ENCODE measurements at regions of chr11 and their contacts with region 1.

Region 1: GRCh38 chr11:20127671-20128527 is 32.4 kb downstream of the DBX1 start:
- DNase-seq: peak; percentile 44
- ATAC-seq: peak; percentile 92
- H3K4me3 ChIP-seq: no peak overlapping the region
- H3K27ac ChIP-seq: no peak overlapping the region
- H3K4me1 ChIP-seq: peaks cover 0 to 9% of the 10 kb centered on the region in 2 experiments; a peak in 1 of 4 replicates
- H3K27me3 ChIP-seq: no peaks in the 10 kb centered on the region
- CTCF ChIP-seq: peak; percentile 71 to 88 (median 83)
- POLR2A ChIP-seq: no peak
- RAD21 ChIP-seq: peak; percentile 88

Region 2: GRCh38 chr11:19519912-19520641 is 607.8 kb before region 1 on chr11:
- CTCF ChIA-PET with region 1: no interaction called
- POLR2A ChIA-PET with region 1: no interaction called
- RAD21 ChIA-PET with region 1: no interaction called
- intact Hi-C with region 1: no loop called
- DNase-seq: no peak
- ATAC-seq: no peak
- H3K4me3 ChIP-seq: no peak overlapping the region
- H3K27ac ChIP-seq: no peak overlapping the region
- H3K4me1 ChIP-seq: no peaks in the 10 kb centered on the region
- H3K27me3 ChIP-seq: peaks cover 43% of the 10 kb centered on the region
- CTCF ChIP-seq: no peak
- POLR2A ChIP-seq: no peak
- RAD21 ChIP-seq: no peak

Region 3: DNA sequence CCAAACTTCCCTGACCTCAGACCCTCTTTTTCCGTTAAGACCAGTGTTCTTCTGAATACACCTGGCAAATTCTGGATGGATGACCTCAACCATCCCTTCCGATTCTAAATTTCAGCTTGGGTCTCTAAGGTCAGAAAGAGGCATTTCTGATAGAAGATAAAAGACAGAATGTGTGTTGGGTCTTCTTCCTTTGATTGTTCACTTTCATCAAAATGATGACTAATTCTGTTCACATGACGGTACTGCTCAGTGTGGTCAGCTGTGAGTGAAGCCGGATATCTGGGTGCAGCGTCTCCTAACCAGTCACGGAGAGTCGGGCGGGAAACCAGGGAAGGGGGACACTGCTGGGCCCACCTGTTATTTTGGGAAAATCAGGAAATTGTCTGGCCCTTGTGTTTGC is 566.9 kb before region 1 on chr11:
- CTCF ChIA-PET with region 1: interaction called, 3 read pairs
- POLR2A ChIA-PET with region 1: no interaction called
- RAD21 ChIA-PET with region 1: no interaction called
- intact Hi-C with region 1: loop called (anchors 5 kb)
- DNase-seq: no peak
- ATAC-seq: no peak
- H3K4me3 ChIP-seq: no peak overlapping the region
- H3K27ac ChIP-seq: no peak overlapping the region
- H3K4me1 ChIP-seq: peaks cover 0 to 6% of the 10 kb centered on the region in 2 experiments; a peak in 1 of 4 replicates
- H3K27me3 ChIP-seq: peaks cover 13% of the 10 kb centered on the region; the same call in 1 of the 2 replicates
- CTCF ChIP-seq: no peak
- POLR2A ChIP-seq: no peak
- RAD21 ChIP-seq: no peak

Region 4: DNA sequence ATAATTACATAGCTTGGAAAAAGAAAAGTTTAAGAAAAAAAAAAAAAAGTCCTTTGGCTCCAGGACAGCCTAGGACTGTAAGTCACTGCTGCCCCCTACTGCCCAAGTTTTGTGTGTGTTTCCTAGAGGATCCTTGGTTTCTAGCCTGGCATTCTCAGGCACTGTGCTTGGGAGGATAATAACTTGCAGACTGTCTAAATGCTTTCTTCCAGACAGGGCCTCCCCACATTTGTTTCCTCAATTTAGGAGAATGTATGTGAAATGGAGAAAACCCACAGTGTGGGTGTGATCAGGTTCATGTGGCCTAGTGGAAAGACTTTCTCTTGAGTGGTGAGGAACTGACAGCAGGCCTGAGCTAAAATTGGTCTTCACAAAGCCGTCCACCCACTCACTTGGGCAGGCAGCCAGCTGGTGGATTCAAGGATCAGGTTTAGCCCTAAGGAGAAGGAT is 224.3 kb before region 1 on chr11:
- CTCF ChIA-PET with region 1: interaction called, 13 read pairs
- POLR2A ChIA-PET with region 1: no interaction called
- RAD21 ChIA-PET with region 1: no interaction called
- intact Hi-C with region 1: loop called (anchors 1 kb)
- DNase-seq: peak; percentile 62
- ATAC-seq: peak; percentile 90
- H3K4me3 ChIP-seq: no peak overlapping the region
- H3K27ac ChIP-seq: no peak overlapping the region
- H3K4me1 ChIP-seq: peaks cover 3 to 4% of the 10 kb centered on the region in 2 experiments; a peak in 3 of 4 replicates
- H3K27me3 ChIP-seq: no peaks in the 10 kb centered on the region
- CTCF ChIP-seq: peak; percentile 73 to 85 (median 76); a peak in 5 of 6 replicates
- POLR2A ChIP-seq: no peak
- RAD21 ChIP-seq: peak; percentile 85

Region 5: GRCh38 chr11:19951558-19952115 is 176.3 kb before region 1 on chr11:
- CTCF ChIA-PET with region 1: interaction called, 16 read pairs
- POLR2A ChIA-PET with region 1: no interaction called
- RAD21 ChIA-PET with region 1: interaction called in 1 of 2 experiments, 3 read pairs
- intact Hi-C with region 1: loop called (anchors 1 kb)
- DNase-seq: peak; percentile 32
- ATAC-seq: peak; percentile 78
- H3K4me3 ChIP-seq: no peak overlapping the region
- H3K27ac ChIP-seq: no peak overlapping the region
- H3K4me1 ChIP-seq: peaks cover 0 to 2% of the 10 kb centered on the region in 2 experiments; a peak in 1 of 4 replicates
- H3K27me3 ChIP-seq: peaks cover 4% of the 10 kb centered on the region
- CTCF ChIP-seq: peak; percentile 47 to 69 (median 60); a peak in 4 of 6 replicates
- POLR2A ChIP-seq: no peak
- RAD21 ChIP-seq: peak; percentile 75

Region 6: GRCh38 chr11:20337526-20338154 is 209.7 kb after region 1 on chr11:
- CTCF ChIA-PET with region 1: interaction called, 7 read pairs
- POLR2A ChIA-PET with region 1: no interaction called
- RAD21 ChIA-PET with region 1: no interaction called
- intact Hi-C with region 1: loop called (anchors 1 kb)
- DNase-seq: peak; percentile 27
- ATAC-seq: peak; percentile 90
- H3K4me3 ChIP-seq: no peak overlapping the region
- H3K27ac ChIP-seq: no peak overlapping the region
- H3K4me1 ChIP-seq: no peaks in the 10 kb centered on the region
- H3K27me3 ChIP-seq: peaks cover 85% of the 10 kb centered on the region
- CTCF ChIP-seq: peak; percentile 47 to 63 (median 51); a peak in 5 of 6 replicates
- POLR2A ChIP-seq: no peak
- RAD21 ChIP-seq: peak; percentile 56

Region 7: GRCh38 chr11:20609727-20610707 is 482.1 kb after region 1 on chr11:
- CTCF ChIA-PET with region 1: interaction called, 23 read pairs
- POLR2A ChIA-PET with region 1: no interaction called
- RAD21 ChIA-PET with region 1: interaction called in 1 of 2 experiments, 3 read pairs
- intact Hi-C with region 1: loop called (anchors 1 kb)
- DNase-seq: peak; percentile 41
- ATAC-seq: peak; percentile 97
- H3K4me3 ChIP-seq: peak overlapping the region in 1 of 2 experiments; percentile 11; a peak in 1 of 4 replicates
- H3K27ac ChIP-seq: no peak overlapping the region
- H3K4me1 ChIP-seq: peaks cover 0 to 9% of the 10 kb centered on the region in 2 experiments; a peak in 1 of 4 replicates
- H3K27me3 ChIP-seq: peaks cover 21% of the 10 kb centered on the region; the same call in 1 of the 2 replicates
- CTCF ChIP-seq: peak; percentile 71 to 90 (median 90); a peak in 5 of 6 replicates
- POLR2A ChIP-seq: no peak
- RAD21 ChIP-seq: peak; percentile 88

Region 8: DNA sequence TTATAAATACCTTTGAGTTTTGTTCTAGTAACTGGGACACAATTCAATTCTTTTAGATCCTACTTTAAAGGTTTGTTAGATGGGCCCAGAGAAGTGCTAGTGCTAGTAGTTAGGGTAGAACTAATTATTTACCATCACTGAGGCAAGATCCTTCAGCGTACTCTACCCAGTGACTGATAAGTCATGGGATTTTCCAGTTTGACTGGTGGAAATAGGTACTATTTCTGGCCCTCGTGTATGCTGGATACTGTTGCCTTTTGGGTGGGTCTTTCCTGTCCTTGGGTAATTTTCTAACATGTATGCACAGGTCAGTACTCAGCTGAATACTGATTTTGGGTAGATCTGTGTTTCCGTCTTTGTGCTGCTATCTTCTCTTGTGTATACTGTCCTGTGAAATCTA is 556.8 kb after region 1 on chr11:
- CTCF ChIA-PET with region 1: no interaction called
- POLR2A ChIA-PET with region 1: no interaction called
- RAD21 ChIA-PET with region 1: no interaction called
- intact Hi-C with region 1: no loop called
- DNase-seq: no peak
- ATAC-seq: no peak
- H3K4me3 ChIP-seq: no peak overlapping the region
- H3K27ac ChIP-seq: no peak overlapping the region
- H3K4me1 ChIP-seq: no peaks in the 10 kb centered on the region
- H3K27me3 ChIP-seq: 0 out of 2 replicates have a peak, but pooled peaks cover 4% of the 10 kb centered on the region
- CTCF ChIP-seq: no peak
- POLR2A ChIP-seq: no peak
- RAD21 ChIP-seq: no peak

Measured in HCT116 (cell line).